Colonic mucosa (tissue), 4 donors: ENCODE measurements at regions of chr1 and their contacts with region 1.

Region 1: GRCh38 chr1:89598450-89599331 is 34.2 kb upstream of the LRRC8C start:
- DNase-seq: no peak
- H3K4me3 ChIP-seq: no peak overlapping the region
- H3K27ac ChIP-seq: no peak overlapping the region
- H3K4me1 ChIP-seq: no peaks in the 10 kb centered on the region
- H3K27me3 ChIP-seq: no peaks in the 10 kb centered on the region
- CTCF ChIP-seq: peak; percentile 70

Region 2: GRCh38 chr1:89047734-89048133 is 551.0 kb before region 1 on chr1:
- intact Hi-C with region 1: no loop called
- DNase-seq: no peak
- H3K4me3 ChIP-seq: no peak overlapping the region
- H3K27ac ChIP-seq: no peak overlapping the region
- H3K4me1 ChIP-seq: no peaks in the 10 kb centered on the region
- H3K27me3 ChIP-seq: no peaks in the 10 kb centered on the region
- CTCF ChIP-seq: no peak

Region 3: DNA sequence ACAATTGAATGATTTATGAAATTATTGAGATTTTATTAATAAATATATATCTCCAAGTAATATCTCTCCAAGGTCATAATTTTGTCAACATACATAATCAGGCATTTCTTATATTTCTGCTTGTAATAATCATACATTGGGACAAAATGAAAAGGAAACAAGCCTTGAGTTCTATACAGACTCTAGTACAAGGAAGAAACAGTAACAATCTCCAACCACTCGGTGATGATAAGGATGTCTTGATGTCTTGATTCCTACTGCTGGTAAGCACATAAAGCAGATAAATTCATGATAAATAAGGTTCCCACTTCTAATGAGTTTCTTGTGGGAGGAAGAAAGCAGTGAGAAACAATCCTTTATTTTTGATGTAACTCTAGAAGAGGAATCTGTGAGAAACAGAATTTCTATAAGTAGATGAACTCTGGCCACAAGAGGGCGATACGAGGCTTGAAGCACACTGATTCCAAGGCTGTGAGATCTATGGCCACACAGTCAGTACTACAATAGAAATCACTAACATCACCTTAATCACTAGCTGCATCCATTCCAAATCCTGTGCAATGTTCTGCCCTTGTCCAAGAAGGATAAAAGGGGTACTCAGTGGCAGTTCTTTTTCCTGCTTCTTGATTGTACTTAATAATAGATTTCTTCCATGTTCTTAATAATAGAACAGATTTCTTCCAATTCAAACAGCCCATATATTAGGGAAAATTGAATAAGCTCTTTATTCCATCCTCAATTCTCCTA is 115.5 kb before region 1 on chr1:
- intact Hi-C with region 1: loop called (anchors 2 kb)
- DNase-seq: peak; percentile 81
- H3K4me3 ChIP-seq: no peak overlapping the region
- H3K27ac ChIP-seq: no peak overlapping the region
- H3K4me1 ChIP-seq: no peaks in the 10 kb centered on the region
- H3K27me3 ChIP-seq: no peaks in the 10 kb centered on the region
- CTCF ChIP-seq: peak; percentile 77